ENCODE measurements at regions of chr1 and their contacts with region 1.

Region 1: GRCh38 chr1:185156854-185157598 is at the starts of genes SWT1 and TRMT1L:
- DNase-seq: peak; percentile 100
- H3K4me3 ChIP-seq: peak within 1 kb of the TSS; percentile 77
- H3K27ac ChIP-seq: peak within 1 kb of the TSS; percentile 97
- H3K4me1 ChIP-seq: no peaks in the 10 kb centered on the region
- H3K27me3 ChIP-seq: no peaks in the 10 kb centered on the region
- CTCF ChIP-seq: no peak
- total RNA-seq, gene SWT1: 3.4 to 5.7 TPM
- total RNA-seq, gene TRMT1L: 14.8 to 20.1 TPM

Region 2: GRCh38 chr1:185044981-185045813 is 111.8 kb before region 1 on chr1 and contains the start of gene RNF2:
- intact Hi-C with region 1: loop called (anchors 10 kb)
- DNase-seq: peak; percentile 79
- H3K4me3 ChIP-seq: peak within 1 kb of the TSS; percentile 71
- H3K27ac ChIP-seq: peak within 1 kb of the TSS; percentile 70
- H3K4me1 ChIP-seq: no peaks in the 10 kb centered on the region
- H3K27me3 ChIP-seq: no peaks in the 10 kb centered on the region
- CTCF ChIP-seq: no peak
- total RNA-seq, gene RNF2: 14.9 to 21.7 TPM